ENCODE measurements at regions of chr20 and their contacts with region 1.

Region 1: DNA sequence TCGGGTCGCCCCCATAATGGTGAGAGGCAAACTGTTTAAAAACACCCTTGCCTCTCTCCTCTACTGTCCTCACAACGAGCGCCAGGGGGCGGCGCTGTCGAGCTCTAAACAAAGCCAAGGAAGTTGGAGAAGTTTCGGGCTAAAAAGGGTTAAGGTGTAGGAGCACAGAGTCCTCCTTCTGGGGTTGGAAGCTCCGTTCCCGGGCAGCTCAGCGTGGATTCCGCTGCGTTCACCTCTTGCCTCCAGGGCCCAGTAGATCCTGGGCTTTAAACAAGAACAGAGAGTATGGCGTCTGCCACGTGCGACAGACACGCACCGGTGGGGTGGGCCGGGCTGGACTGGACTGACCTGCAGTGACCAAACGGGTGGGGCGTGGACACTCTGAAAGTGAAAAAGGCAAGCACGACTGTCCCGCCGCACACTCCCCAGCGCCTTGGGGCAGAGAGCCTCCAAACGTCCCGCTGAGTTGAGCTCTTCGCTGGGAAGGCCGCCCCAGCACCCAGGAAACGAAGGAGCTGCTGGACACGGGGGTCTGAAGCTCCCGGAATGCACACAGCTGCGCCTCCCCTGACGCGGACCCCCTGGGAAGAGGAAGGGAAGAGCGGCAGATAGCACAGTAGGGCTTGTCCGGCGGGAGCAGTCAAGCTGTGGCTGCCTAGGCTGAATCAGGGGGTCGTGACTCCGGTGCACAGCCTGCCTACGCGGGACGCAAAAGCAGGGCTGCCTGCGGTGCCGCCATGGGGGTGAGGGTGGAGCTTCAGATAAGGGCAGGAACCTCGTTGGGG is 1.6 kb upstream of the THBD start:
- DNase-seq: peak in 3 of 4 donors; percentile 83 to 93 (median 88)
- ATAC-seq: peak; percentile 59
- H3K4me3 ChIP-seq: peak overlapping the region; percentile 51 to 53
- H3K27ac ChIP-seq: peak overlapping the region; percentile 89 to 91
- H3K4me1 ChIP-seq: peaks cover 7 to 53% of the 10 kb centered on the region in 2 donors
- H3K27me3 ChIP-seq: peaks cover 12 to 44% of the 10 kb centered on the region in 2 donors
- CTCF ChIP-seq: peak; percentile 57 to 83

Region 2: GRCh38 chr20:23235173-23236027 is 184.4 kb after region 1 on chr20:
- intact Hi-C with region 1: loop called in 1 of 2 experiments (anchors 5 kb)
- DNase-seq: peak in 3 of 4 donors; percentile 53 to 89 (median 74)
- ATAC-seq: peak; percentile 96
- H3K4me3 ChIP-seq: no peak overlapping the region
- H3K27ac ChIP-seq: no peak overlapping the region
- H3K4me1 ChIP-seq: no peaks in the 10 kb centered on the region
- H3K27me3 ChIP-seq: no peaks in the 10 kb centered on the region
- CTCF ChIP-seq: peak; percentile 51 to 87

Measured in left lung (tissue), 14 donors.